ENCODE measurements at regions of chr15 and their contacts with region 1.

Region 1: GRCh38 chr15:43408789-43409188 is 37.9 kb downstream of the TUBGCP4 start:
- DNase-seq: no peak
- H3K4me3 ChIP-seq: no peak overlapping the region
- H3K27ac ChIP-seq: no peak overlapping the region
- H3K4me1 ChIP-seq: peaks cover 0 to 21% (median 14%) of the 10 kb centered on the region in 4 donors
- H3K27me3 ChIP-seq: no peaks in the 10 kb centered on the region
- CTCF ChIP-seq: no peak
- EP300 ChIP-seq: no peak
- POLR2A ChIP-seq: no peak

Region 2: GRCh38 chr15:43465105-43465504 is 56.3 kb after region 1 on chr15:
- intact Hi-C with region 1: loop called (anchors 10 kb)
- DNase-seq: no peak
- H3K4me3 ChIP-seq: no peak overlapping the region
- H3K27ac ChIP-seq: no peak overlapping the region
- H3K4me1 ChIP-seq: no peaks in the 10 kb centered on the region
- H3K27me3 ChIP-seq: no peaks in the 10 kb centered on the region
- CTCF ChIP-seq: no peak
- EP300 ChIP-seq: no peak
- POLR2A ChIP-seq: no peak

Measured in sigmoid colon (tissue), 7 donors.